PC-9 (cell line): ENCODE measurements at regions of chr5 and their contacts with region 1.

Region 1: DNA sequence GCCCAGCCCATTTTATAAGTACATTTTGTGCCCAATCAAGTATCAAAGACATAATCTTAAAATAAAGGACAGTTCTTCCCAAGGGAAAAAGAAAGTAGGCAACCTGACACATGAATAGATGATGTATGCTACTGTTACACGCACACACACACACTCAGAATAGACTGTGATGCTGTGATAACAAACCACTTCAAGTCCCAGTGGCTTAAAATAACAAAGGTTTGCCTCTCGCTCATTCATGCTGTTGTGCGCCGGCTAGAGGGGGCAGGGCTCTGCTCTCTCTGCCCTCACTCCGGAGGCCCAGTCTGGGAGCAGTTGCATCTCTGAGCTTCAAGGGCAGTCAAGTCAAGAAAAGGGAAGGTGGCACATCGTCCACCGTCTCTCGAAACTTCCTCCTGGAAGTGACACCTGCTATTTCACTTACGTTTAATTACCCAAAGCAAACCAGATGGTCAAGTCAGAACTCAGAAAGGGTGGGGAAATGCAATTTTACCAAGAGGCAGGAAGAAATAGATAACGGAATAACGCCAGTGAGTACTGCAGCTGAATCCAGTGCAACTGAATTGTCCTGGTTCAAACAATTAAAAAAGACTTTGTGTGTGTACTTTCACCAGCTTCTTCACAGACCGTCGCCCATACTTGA is 43.3 kb downstream of the ANKRD33B start:
- DNase-seq: no peak
- H3K4me3 ChIP-seq: no peak overlapping the region
- H3K27ac ChIP-seq: no peak overlapping the region
- H3K4me1 ChIP-seq: peaks cover 3% of the 10 kb centered on the region
- H3K27me3 ChIP-seq: no peaks in the 10 kb centered on the region
- CTCF ChIP-seq: no peak

Region 2: DNA sequence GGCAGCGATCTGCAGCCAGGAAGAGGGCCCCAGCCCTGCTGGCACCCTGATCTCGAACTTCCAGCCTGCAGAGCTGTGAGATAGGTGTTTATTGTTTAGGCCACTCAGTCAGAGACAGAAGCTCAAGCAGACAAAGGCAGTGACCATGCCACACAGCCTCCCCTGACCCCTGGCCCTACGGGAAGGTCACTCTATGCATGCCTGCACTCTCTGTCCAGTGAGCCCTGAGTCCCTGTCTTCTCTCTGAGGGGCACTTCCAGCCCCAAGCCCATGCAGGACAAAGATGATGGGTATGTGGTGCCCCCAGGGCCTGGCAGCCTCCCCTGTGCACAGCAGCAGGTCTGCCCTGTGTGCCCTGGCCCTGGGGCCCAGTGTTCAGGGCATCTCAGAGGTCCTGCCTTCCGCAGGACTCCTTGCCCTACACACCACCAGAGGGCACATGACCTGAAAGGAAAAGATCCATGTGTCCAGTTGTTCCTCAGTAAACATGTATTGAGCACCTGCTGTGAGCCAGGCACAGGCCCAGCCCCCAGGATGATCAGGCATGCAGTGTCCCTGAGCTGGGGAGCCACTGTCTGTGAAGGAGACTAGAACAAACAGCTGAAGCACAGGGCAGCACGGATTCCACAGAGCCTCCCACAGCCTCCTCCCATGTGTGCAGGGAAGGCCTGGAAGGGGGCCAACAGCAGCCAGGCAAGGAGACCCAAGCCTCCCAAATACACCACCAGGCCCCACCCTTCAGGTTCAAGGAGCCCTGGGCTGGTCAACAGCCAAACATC is 466.8 kb before region 1 on chr5:
- CTCF ChIA-PET with region 1: no interaction called
- POLR2A ChIA-PET with region 1: interaction called, 14 read pairs
- intact Hi-C with region 1: no loop called
- DNase-seq: peak; percentile 34 to 35
- H3K4me3 ChIP-seq: no peak overlapping the region
- H3K27ac ChIP-seq: no peak overlapping the region
- H3K4me1 ChIP-seq: no peaks in the 10 kb centered on the region
- H3K27me3 ChIP-seq: no peaks in the 10 kb centered on the region
- CTCF ChIP-seq: 0 out of 2 replicates have a peak, but pooled peaks have one; percentile 46

Region 3: GRCh38 chr5:10590226-10590999 is 16.7 kb before region 1 on chr5:
- CTCF ChIA-PET with region 1: no interaction called
- POLR2A ChIA-PET with region 1: interaction called, 16 read pairs
- intact Hi-C with region 1: no loop called
- DNase-seq: peak; percentile 75 to 79
- H3K4me3 ChIP-seq: no peak overlapping the region
- H3K27ac ChIP-seq: peak overlapping the region; percentile 17
- H3K4me1 ChIP-seq: peaks cover 31% of the 10 kb centered on the region
- H3K27me3 ChIP-seq: no peaks in the 10 kb centered on the region
- CTCF ChIP-seq: no peak

Region 4: DNA sequence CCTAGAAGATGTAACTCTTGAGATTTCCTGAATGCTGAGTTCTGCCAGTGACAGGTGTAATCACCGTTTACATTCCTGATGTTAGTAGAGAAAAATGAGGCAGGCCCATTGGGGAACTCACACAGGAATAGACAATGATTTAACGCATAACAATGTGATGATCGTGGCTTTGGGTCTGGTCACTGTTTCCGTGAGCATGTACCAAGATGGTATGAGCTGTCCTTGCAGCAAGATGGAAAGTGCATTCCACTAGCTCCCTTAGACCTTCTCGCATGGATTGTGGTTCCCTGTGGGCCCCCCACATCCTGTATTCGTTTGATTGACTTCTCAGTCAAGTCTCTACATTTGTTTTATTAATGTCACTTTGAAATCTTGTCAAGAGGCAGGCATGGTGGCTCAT is 277.9 kb after region 1 on chr5:
- CTCF ChIA-PET with region 1: no interaction called
- POLR2A ChIA-PET with region 1: no interaction called
- intact Hi-C with region 1: no loop called
- DNase-seq: peak in 1 of 2 experiments; percentile 52
- H3K4me3 ChIP-seq: no peak overlapping the region
- H3K27ac ChIP-seq: no peak overlapping the region
- H3K4me1 ChIP-seq: no peaks in the 10 kb centered on the region
- H3K27me3 ChIP-seq: no peaks in the 10 kb centered on the region
- CTCF ChIP-seq: no peak